ENCODE measurements at regions of chr6 and their contacts with region 1.

Region 1: GRCh38 chr6:164078532-164079274 is 664.2 kb downstream of the QKI start:
- DNase-seq: no peak
- H3K4me3 ChIP-seq: no peak overlapping the region
- H3K27ac ChIP-seq: no peak overlapping the region
- H3K4me1 ChIP-seq: peaks cover 0 to 8% (median 4%) of the 10 kb centered on the region in 4 donors
- H3K27me3 ChIP-seq: no peaks in the 10 kb centered on the region
- CTCF ChIP-seq: no peak

Region 2: GRCh38 chr6:164010441-164011103 is 68.1 kb before region 1 on chr6:
- intact Hi-C with region 1: no loop called
- DNase-seq: no peak
- H3K4me3 ChIP-seq: no peak overlapping the region
- H3K27ac ChIP-seq: no peak overlapping the region
- H3K4me1 ChIP-seq: no peaks in the 10 kb centered on the region
- H3K27me3 ChIP-seq: no peaks in the 10 kb centered on the region
- CTCF ChIP-seq: no peak

Region 3: GRCh38 chr6:164039954-164040375 is 38.7 kb before region 1 on chr6:
- intact Hi-C with region 1: no loop called
- DNase-seq: no peak
- H3K4me3 ChIP-seq: no peak overlapping the region
- H3K27ac ChIP-seq: no peak overlapping the region
- H3K4me1 ChIP-seq: no peaks in the 10 kb centered on the region
- H3K27me3 ChIP-seq: peaks cover 0 to 2% of the 10 kb centered on the region in 2 donors
- CTCF ChIP-seq: no peak

Region 4: GRCh38 chr6:165744555-165745228 is 1666.0 kb after region 1 on chr6:
- intact Hi-C with region 1: loop called (anchors 5 kb)
- DNase-seq: no peak
- H3K4me3 ChIP-seq: no peak overlapping the region
- H3K27ac ChIP-seq: no peak overlapping the region
- H3K4me1 ChIP-seq: no peaks in the 10 kb centered on the region
- H3K27me3 ChIP-seq: no peaks in the 10 kb centered on the region
- CTCF ChIP-seq: no peak